Posterior vena cava (tissue), 2 donors: ENCODE measurements at regions of chr18 and their contacts with region 1.

Region 1: DNA sequence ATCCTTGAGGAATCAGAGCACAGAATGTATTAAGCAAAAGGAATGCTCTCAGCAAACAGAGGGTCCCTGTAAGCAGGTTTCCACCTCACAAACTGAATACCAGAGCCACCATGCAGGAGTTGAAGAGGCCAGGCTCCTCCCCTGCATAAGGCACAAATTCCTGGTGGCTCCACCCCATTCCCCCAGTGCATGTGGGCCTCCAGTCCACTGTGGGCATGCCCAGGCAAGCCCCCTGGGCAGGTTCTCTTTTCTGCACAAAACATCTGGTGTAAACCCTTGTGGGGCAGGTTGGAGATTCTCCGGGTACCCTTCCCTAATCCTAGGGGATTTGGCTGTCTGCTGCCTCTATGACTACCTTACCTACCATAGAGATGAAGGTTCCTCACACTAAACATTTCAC is 166.5 kb downstream of the PTPRM start:
- DNase-seq: no peak

Region 2: GRCh38 chr18:7479756-7480155 is 253.9 kb before region 1 on chr18:
- intact Hi-C with region 1: no loop called
- DNase-seq: no peak

Region 3: DNA sequence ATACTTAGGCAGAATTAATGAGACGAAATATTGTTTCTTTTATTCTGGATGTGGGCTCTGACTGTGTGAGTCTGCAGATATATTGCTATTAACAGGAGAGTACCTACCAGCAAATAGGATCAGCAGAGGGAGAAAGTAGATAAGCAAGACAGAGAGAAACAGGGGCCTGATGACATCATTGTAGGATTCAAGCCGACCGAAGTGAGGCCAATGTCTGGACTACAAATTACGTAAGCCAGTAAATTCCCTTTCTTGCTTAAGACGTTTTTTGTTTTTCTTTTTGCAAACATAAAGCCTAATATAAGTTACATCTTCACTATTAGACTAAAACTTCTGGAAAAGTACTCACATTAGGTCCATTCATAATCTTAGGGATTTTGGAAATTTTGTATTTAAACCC is 187.9 kb before region 1 on chr18:
- intact Hi-C with region 1: no loop called
- DNase-seq: no peak

Region 4: DNA sequence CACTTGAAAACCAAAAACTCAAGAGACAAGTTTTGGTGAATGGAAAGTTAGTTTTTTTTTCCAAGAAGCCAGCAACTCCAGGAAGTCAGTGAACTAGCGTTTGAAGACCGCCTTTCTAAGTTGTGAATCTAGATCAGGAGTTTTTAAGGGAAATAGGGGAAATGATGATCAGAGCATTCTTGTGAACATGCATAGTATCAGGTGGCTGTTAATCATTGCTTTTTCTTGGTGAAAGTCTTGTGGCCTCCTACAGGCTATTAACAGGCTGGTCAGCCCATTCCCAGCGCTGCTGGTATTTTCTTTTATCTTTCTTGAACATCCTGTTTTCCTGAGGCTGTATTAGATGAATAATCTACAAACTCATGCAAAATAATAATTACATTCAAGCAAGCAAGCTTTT is 10.7 kb before region 1 on chr18:
- intact Hi-C with region 1: no loop called
- DNase-seq: no peak

Region 5: GRCh38 chr18:8930990-8931648 is 1197.5 kb after region 1 on chr18:
- intact Hi-C with region 1: loop called in 1 of 2 experiments (anchors 5 kb)
- DNase-seq: no peak

Region 6: DNA sequence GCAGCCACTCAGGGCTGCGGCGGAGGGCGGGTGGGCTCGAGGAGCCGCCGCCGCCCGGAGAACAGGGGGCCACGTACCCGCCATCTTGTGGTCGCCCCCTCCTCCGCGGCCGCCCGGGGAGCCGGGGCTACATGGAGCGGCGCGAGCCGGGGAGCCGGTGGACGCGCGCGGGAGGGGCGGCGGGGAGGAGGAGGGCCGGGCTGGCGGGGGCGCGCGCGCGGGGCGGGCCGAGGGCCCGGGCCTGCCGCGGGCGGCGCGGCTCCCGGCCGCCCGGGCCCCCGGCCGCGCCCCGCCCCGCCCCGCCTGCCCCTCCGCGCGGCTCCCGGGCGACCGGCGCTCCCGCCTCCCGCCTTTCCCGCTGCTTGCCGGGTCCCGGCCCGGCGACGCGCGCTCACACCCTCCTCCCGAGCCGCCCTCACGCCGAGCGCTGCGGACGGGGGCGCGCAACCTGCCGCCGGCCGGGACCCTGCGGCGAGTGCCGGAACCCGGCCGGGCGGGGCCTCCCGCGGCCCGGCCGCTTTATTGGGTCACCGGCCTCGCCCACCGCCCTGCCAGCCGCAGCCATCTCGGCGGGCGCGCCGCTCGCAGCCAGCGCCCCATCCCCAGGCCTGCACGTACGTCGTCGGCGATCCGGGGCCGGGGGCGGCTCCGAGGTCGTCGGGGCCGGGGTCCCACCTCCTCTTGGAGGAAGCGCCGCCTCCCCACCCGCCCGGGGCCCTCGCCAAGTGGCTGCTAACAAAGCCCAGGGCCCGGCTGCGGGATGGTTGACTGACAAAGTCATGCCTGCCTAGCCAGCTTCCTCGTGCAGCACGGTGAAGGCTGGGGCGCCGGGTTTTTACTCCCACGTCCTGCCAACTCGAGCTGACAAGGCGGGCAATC is 1881.0 kb after region 1 on chr18 and contains the start of gene PPP4R1:
- intact Hi-C with region 1: no loop called
- DNase-seq: peak; percentile 93
- total RNA-seq, gene PPP4R1: 84.0 to 108 TPM